ENCODE measurements at regions of chr20 and their contacts with region 1.

Region 1: GRCh38 chr20:54167909-54168872 is 5.6 kb downstream of the CYP24A1 start:
- DNase-seq: peak; percentile 81
- ATAC-seq: peak; percentile 57
- H3K4me3 ChIP-seq: peak overlapping the region; percentile 40 to 50
- H3K27ac ChIP-seq: peak overlapping the region; percentile 94
- H3K4me1 ChIP-seq: peaks cover 70 to 76% of the 10 kb centered on the region in 2 experiments
- H3K27me3 ChIP-seq: no peaks in the 10 kb centered on the region
- CTCF ChIP-seq: no peak
- POLR2A ChIP-seq: no peak
- RAD21 ChIP-seq: no peak

Region 2: DNA sequence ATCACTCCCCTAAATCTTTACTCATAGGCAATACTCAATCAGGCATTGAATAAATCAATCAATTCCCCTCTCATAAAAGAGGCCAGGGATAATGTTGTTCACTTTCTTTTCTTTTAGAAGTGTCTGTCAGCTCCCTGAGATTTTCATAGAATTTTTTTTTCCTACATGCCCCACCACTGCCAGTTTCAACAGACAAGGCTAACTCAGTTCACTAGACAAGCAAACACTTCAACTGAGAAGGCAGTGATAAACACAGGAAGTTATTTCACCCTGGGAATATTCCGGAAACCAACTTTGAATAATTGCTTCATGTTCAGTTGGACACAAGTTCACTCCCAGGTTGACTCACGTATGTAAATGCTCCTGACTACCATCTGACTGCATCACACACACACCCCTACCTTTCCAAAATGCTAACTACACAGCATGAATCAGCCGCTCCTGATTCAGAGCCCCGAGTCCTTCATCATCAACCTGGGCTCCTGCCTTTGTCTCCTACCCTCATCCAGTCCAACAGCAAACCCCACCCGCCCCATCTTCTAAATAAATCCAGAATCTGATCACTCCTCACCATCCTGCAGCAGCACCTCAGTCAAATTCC is 241.7 kb before region 1 on chr20:
- CTCF ChIA-PET with region 1: no interaction called
- POLR2A ChIA-PET with region 1: no interaction called
- RAD21 ChIA-PET with region 1: no interaction called
- intact Hi-C with region 1: no loop called
- DNase-seq: no peak
- ATAC-seq: no peak
- H3K4me3 ChIP-seq: no peak overlapping the region
- H3K27ac ChIP-seq: no peak overlapping the region
- H3K4me1 ChIP-seq: peaks cover 0 to 20% of the 10 kb centered on the region in 2 experiments; a peak in 2 of 4 replicates
- H3K27me3 ChIP-seq: no peaks in the 10 kb centered on the region
- CTCF ChIP-seq: no peak
- POLR2A ChIP-seq: no peak
- RAD21 ChIP-seq: no peak

Region 3: DNA sequence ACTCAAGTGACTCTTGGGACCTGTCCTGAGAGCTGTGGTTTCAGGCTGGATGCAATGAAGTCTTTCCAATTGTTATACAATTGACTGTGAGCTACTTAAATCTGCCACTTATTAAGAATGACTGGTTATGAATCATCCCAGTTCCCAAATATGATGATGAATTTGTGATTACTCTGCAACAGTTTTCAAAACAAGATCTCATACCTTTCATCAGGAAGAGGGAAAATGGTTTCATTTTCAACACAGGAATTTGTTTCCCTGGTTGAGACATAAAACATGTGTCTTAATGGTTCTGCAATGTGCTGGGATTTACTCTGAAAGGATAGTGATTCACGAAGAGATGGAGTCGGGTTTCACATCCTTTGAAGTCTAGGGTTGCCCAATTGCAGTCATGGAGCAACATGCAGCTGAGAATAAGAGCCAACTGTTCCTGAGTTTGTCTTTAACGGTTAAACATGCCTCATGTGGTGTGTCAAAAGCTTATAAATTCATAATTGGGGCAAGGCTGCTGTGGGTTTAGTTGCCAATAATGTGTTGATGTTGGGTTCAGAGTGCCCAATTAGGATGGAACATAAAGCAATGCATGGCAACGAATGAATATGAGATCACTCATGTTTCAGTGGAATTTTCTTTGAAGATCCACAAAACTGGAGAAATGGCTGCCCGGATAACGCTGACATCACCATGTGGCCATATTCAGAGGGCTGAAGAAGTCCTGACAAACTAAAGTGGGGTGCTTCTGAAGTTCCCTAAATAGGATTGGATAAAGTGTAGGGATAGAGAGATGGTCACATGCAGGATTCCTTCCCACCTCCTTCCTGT is 35.4 kb before region 1 on chr20:
- CTCF ChIA-PET with region 1: interaction called, 5 read pairs
- POLR2A ChIA-PET with region 1: interaction called, 14 read pairs
- RAD21 ChIA-PET with region 1: no interaction called
- intact Hi-C with region 1: no loop called
- DNase-seq: peak; percentile 92
- ATAC-seq: peak; percentile 76
- H3K4me3 ChIP-seq: peak overlapping the region in 1 of 2 experiments; percentile 2; a peak in 1 of 4 replicates
- H3K27ac ChIP-seq: peak overlapping the region; percentile 98
- H3K4me1 ChIP-seq: peaks cover 55 to 80% of the 10 kb centered on the region in 2 experiments
- H3K27me3 ChIP-seq: no peaks in the 10 kb centered on the region
- CTCF ChIP-seq: no peak
- POLR2A ChIP-seq: peak; percentile 18
- RAD21 ChIP-seq: peak; percentile 3; the same call in 1 of the 2 replicates

Region 4: DNA sequence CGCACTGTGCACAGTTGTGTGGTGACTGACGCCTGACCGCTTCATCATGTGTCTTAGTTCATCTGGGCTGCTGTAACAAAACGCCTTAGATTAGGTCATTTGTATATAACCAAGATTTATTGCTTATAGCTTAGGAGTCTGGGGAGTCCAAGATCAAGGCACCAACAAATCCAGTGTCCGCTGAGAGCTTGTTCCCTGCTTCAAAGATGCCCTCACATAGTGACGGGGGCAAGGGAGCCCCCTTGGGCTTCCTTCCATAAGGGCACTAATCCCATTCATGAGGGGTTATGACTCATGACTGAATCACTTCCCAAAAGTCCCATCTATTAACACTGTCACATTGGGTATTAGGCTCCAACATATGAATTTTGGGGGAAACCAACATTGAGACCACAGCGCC is 29.0 kb before region 1 on chr20:
- CTCF ChIA-PET with region 1: no interaction called
- POLR2A ChIA-PET with region 1: interaction called, 14 read pairs
- RAD21 ChIA-PET with region 1: interaction called in 1 of 2 experiments, 10 read pairs
- intact Hi-C with region 1: no loop called
- DNase-seq: peak; percentile 80
- ATAC-seq: peak; percentile 75
- H3K4me3 ChIP-seq: peak overlapping the region in 1 of 2 experiments; percentile 14; a peak in 2 of 4 replicates
- H3K27ac ChIP-seq: peak overlapping the region; percentile 94
- H3K4me1 ChIP-seq: peaks cover 59 to 73% of the 10 kb centered on the region in 2 experiments
- H3K27me3 ChIP-seq: no peaks in the 10 kb centered on the region
- CTCF ChIP-seq: no peak
- POLR2A ChIP-seq: no peak
- RAD21 ChIP-seq: no peak; the same call in 1 of the 2 replicates

Measured in HCT116 (cell line).